ENCODE measurements at regions of chrX and their contacts with region 1.

Region 1: DNA sequence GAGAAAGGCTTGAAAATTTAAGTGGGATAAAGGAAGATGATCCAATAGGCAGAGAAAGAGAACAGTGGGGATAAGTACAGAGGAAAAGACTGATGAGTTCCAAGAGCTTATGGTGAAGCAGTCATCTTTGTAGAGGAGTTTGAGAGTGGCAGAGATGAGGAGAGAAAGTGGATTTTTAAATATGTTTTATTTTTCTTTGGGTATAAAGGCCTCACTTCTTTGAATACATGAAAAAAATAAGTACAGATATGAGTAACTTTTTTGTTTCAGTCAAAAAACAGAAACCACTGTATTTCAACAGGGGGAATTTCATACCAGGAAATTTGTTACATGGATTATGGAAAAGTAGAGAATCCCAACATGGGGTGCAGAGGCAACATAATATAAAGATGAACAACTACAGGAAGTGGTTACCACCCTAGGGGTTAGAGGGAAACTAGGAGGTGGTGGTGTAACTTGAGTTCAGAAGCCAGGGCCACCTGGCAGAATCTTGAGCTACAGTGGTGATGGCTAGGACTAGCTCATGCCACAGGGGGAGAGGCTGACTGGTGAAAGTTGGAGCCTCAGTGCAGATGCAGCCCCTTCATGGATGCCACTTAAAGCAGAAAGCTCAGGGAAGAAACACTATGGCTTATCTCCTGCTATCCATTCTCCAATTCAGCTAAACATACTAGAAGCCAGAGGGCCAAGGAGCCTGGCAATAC is 3.4 kb upstream of the CYBB start:
- DNase-seq: peak; percentile 77
- H3K4me3 ChIP-seq: peak overlapping the region; percentile 32
- H3K27ac ChIP-seq: peak overlapping the region; percentile 75
- H3K4me1 ChIP-seq: peaks cover 43% of the 10 kb centered on the region
- CTCF ChIP-seq: no peak

Region 2: GRCh38 chrX:37755025-37755424 is 21.4 kb before region 1 on chrX:
- CTCF ChIA-PET with region 1: interaction called, 6 read pairs
- POLR2A ChIA-PET with region 1: interaction called, 85 read pairs
- intact Hi-C with region 1: no loop called
- DNase-seq: peak; percentile 86
- H3K4me3 ChIP-seq: peak overlapping the region; percentile 46
- H3K27ac ChIP-seq: peak overlapping the region; percentile 100
- H3K4me1 ChIP-seq: peaks cover 73% of the 10 kb centered on the region
- CTCF ChIP-seq: no peak

Region 3: DNA sequence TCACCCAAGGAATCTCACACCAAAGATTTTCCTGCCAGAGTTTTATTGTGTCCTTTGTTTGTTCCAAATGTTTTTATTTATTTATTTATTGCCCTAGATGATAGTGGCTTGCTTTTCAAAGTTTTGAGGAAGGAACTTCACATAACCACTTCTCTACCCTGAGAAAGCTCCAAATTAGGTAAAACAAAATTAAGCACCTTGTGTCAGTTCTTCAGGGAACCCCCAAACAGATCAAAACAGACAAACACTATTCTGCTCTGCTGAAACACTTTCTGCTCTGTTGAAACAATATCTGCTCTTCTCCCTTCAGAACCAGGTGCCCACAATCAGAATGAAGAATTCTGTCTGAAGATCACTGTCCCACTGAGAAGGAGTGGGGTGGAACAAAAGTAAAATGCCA is 13.0 kb before region 1 on chrX:
- CTCF ChIA-PET with region 1: interaction called, 4 read pairs
- POLR2A ChIA-PET with region 1: interaction called, 51 read pairs
- intact Hi-C with region 1: no loop called
- DNase-seq: no peak
- H3K4me3 ChIP-seq: no peak overlapping the region
- H3K27ac ChIP-seq: no peak overlapping the region
- H3K4me1 ChIP-seq: peaks cover 46% of the 10 kb centered on the region
- CTCF ChIP-seq: no peak

Region 4: GRCh38 chrX:37787423-37787869 is 11.0 kb after region 1 on chrX:
- CTCF ChIA-PET with region 1: interaction called, 7 read pairs
- POLR2A ChIA-PET with region 1: interaction called, 16 read pairs
- intact Hi-C with region 1: no loop called
- DNase-seq: peak; percentile 66
- H3K4me3 ChIP-seq: peak overlapping the region; percentile 58
- H3K27ac ChIP-seq: peak overlapping the region; percentile 99
- H3K4me1 ChIP-seq: peaks cover 78% of the 10 kb centered on the region
- CTCF ChIP-seq: no peak

Region 5: DNA sequence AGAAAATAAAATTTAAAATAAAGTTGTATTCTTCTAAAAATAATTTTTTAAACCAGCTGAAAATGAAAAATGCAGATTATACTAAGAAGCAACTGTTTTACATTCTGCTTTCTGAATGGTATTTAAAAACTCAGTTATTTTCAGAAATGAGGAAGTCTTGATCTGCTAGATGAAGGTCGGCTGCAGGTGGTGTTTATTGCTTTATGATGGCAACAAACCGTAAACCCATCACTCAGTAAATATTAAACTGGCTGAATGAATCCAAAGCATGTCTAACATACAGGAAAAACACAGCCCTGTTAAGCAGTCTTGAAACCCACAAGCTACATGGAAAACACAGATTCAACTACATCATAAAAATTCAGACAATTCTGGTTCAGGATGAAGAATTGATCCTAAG is 41.6 kb after region 1 on chrX:
- CTCF ChIA-PET with region 1: interaction called, 5 read pairs
- POLR2A ChIA-PET with region 1: interaction called, 65 read pairs
- intact Hi-C with region 1: loop called (anchors 5 kb)
- DNase-seq: peak; percentile 87
- H3K4me3 ChIP-seq: peak overlapping the region; percentile 65
- H3K27ac ChIP-seq: peak overlapping the region; percentile 100
- H3K4me1 ChIP-seq: peaks cover 96% of the 10 kb centered on the region
- CTCF ChIP-seq: no peak

Region 6: DNA sequence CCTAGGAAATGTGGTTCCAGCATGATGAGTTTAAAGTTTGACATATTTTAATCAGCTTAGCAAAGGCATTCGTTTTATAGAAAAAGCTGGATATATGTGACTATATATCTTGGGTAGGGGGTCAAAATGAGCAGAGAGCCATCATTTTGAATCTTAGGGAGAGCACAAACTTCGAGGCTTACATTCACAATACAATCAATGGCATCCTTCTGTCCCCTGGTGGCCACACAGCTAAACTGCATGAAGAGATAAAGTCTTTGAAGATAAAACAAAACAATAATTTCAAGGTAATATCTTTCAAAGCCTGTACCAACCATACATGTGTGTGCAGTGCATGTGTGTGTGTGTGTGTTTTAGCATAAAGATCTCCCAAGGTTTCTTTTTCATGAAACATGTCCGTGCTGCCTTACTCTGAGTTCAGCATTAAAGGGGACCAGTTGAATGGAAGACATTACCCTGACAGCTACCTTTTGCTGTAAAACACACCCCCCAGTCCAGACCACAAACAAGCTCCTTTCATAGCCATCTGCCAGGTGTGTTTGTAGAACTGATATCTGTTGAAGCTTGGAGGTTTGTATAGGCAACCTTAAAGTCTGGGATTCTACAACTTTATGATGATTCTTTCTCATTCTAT is 48.9 kb after region 1 on chrX:
- CTCF ChIA-PET with region 1: no interaction called
- POLR2A ChIA-PET with region 1: interaction called, 65 read pairs
- intact Hi-C with region 1: no loop called
- DNase-seq: peak; percentile 73
- H3K4me3 ChIP-seq: no peak overlapping the region
- H3K27ac ChIP-seq: peak overlapping the region; percentile 60
- H3K4me1 ChIP-seq: peaks cover 53% of the 10 kb centered on the region
- CTCF ChIP-seq: peak; percentile 91